Cardiac septum (tissue), 1 donor: ENCODE measurements at regions of chr11 and their contacts with region 1.

Region 1: GRCh38 chr11:94897330-94897768 is 76.0 kb downstream of the CWC15 start:
- DNase-seq: no peak

Region 2: GRCh38 chr11:94741022-94741679 is 156.2 kb before region 1 on chr11:
- intact Hi-C with region 1: no loop called
- DNase-seq: no peak

Region 3: GRCh38 chr11:94786264-94787126 is 110.9 kb before region 1 on chr11:
- intact Hi-C with region 1: loop called (anchors 5 kb)
- DNase-seq: no peak